Activated CD4-positive, alpha-beta memory T cell treated with anti-CD3 and anti-CD28 coated beads for 36 hours (primary cell): ENCODE measurements at regions of chr11 and their contacts with region 1.

Region 1: GRCh38 chr11:66438504-66439466 is at the start of gene MRPL11:
- DNase-seq: peak; percentile 94
- H3K4me3 Mint-ChIP-seq: peak within 1 kb of the TSS; percentile 86
- H3K27ac Mint-ChIP-seq: peak within 1 kb of the TSS; percentile 99
- H3K4me1 Mint-ChIP-seq: peaks cover 13% of the 10 kb centered on the region
- H3K27me3 Mint-ChIP-seq: peaks cover 3% of the 10 kb centered on the region
- total RNA-seq, gene MRPL11: 104 to 106 TPM

Region 2: GRCh38 chr11:66386171-66387069 is 52.4 kb before region 1 on chr11:
- CTCF ChIA-PET with region 1: interaction called, 19 read pairs
- POLR2A ChIA-PET with region 1: no interaction called
- intact Hi-C with region 1: no loop called
- DNase-seq: peak; percentile 88
- H3K4me3 Mint-ChIP-seq: peak overlapping the region; percentile 1
- H3K27ac Mint-ChIP-seq: no peak overlapping the region
- H3K4me1 Mint-ChIP-seq: peaks cover 8% of the 10 kb centered on the region
- H3K27me3 Mint-ChIP-seq: peaks cover 1% of the 10 kb centered on the region

Region 3: DNA sequence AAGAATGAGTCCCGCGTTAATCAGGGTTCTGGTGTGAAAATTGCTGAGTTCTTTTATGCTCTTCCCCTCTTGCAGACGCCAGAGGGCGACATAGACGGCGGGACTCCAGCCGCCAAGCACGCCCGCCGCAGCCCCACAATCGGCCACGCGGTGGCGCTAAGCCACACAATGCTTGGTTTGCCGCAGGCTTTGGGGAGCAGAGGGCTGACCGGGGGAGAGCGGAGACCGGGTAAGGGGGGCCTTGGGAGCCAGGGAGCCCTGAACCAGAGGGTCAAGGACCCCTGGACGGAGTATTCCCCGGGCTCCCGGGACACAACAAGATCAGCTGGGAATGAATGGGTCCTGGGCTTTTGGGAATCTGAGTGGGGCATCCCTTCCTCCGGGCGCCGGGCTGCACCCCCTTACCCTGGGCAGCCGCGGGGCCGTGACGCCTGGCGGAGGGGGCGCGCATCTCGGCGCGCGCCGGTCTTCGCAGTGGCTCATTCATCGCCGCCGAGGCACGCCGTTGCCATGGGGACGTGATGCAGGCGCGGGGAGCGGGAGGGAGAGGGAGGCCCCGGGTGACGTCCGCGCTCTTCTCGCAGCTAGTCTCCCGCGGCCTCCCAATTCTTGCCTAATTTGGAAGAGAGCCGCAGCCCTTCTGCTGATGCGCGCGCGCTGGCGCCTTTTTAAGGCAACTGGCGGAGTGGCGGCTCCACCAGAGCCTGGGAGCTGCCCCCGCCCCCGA is 30.1 kb before region 1 on chr11:
- CTCF ChIA-PET with region 1: interaction called, 104 read pairs
- POLR2A ChIA-PET with region 1: no interaction called
- intact Hi-C with region 1: loop called (anchors 2 kb)
- DNase-seq: peak; percentile 93
- H3K4me3 Mint-ChIP-seq: peak overlapping the region; percentile 67
- H3K27ac Mint-ChIP-seq: no peak overlapping the region
- H3K4me1 Mint-ChIP-seq: peaks cover 4% of the 10 kb centered on the region
- H3K27me3 Mint-ChIP-seq: peaks cover 17% of the 10 kb centered on the region

Region 4: DNA sequence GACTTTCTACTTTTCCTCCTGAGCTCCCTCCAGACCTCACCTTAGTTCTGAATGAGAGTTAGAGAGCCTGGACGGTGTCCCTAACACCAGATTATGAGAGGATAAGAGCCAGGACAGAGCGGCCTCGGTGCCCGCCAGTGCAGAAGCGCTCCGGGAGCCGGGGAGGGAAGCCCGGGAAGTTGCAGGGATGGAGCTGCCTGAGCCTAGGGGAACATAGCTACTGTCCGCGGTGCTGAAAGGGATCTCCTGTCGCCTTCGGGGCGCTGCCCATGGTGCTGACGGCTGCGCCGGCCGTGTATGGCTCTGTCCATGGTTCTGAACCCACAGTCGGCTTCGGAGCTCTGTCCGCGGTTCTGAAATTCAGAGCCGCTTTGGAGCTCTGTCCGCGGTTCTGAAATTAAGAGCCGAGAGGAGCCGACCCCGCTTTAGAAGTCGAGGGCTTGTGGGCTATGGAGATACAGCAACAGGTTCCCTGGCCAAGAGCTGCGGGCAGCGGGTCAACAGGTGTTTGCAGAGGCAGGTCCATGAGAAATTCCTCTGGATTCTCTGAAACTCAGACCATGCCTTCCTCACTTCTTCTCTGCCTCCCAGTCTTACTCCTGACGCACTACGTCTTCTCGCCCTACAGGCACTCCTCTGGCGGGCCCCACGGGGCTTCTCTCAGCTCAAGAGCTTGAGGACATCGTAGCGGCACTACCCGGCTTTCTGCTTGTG is 17.1 kb before region 1 on chr11:
- CTCF ChIA-PET with region 1: interaction called, 22 read pairs
- POLR2A ChIA-PET with region 1: interaction called, 7 read pairs
- intact Hi-C with region 1: no loop called
- DNase-seq: peak; percentile 92
- H3K4me3 Mint-ChIP-seq: no peak overlapping the region
- H3K27ac Mint-ChIP-seq: no peak overlapping the region
- H3K4me1 Mint-ChIP-seq: peaks cover 27% of the 10 kb centered on the region
- H3K27me3 Mint-ChIP-seq: peaks cover 26% of the 10 kb centered on the region

Region 5: GRCh38 chr11:66466225-66467027 is 27.6 kb after region 1 on chr11 and contains the start of gene PELI3:
- CTCF ChIA-PET with region 1: interaction called, 8 read pairs
- POLR2A ChIA-PET with region 1: interaction called, 3 read pairs
- intact Hi-C with region 1: loop called (anchors 1 kb)
- DNase-seq: peak; percentile 96
- H3K4me3 Mint-ChIP-seq: peak within 1 kb of the TSS; percentile 79
- H3K27ac Mint-ChIP-seq: peak within 1 kb of the TSS; percentile 64
- H3K4me1 Mint-ChIP-seq: peaks cover 31% of the 10 kb centered on the region
- H3K27me3 Mint-ChIP-seq: no peaks in the 10 kb centered on the region
- total RNA-seq, gene PELI3: 7.0 to 8.5 TPM

Region 6: DNA sequence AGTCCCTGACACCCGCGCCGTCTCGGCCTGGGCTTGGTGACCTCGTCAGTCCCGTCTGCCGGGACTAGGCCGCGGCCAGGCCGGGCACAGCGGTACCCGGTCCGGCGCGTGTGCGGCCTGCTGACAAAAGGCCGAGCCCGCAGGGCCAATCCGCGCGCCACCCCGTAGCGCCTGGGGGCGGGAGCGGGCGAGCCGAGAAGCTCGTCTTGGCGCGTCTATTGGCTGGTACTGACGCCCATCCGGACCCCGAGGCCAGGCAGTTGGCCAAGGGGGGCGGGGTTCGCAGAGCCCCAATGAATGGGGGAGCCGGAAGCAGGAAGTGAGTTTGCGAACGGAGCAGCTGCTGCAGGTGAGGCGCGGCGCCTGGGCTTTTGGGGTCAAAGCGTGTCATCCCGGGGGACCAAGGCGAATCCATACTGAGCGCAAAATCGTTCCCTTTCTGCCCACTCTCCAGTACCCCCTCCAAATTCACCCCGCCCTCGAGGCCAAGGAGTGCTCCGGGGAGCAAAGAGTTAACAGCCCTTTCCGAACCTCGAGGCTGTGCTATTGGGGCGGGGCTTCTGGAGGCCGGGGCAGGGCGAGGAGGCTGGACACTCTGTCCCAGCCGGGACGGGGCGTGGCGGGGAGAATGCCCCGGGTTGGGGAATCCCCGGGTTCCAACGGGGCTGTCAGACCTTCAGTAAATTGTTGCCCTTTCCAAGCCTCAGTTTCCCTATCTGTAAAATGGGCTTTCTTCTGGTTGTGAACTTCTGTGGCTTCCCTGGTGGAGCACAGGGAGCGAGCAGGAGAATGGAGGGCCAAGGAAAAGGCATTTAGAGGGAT is 41.5 kb after region 1 on chr11 and contains the start of gene DPP3:
- CTCF ChIA-PET with region 1: interaction called, 13 read pairs
- POLR2A ChIA-PET with region 1: interaction called, 7 read pairs
- intact Hi-C with region 1: loop called (anchors 1 kb)
- DNase-seq: peak; percentile 98
- H3K4me3 Mint-ChIP-seq: peak within 1 kb of the TSS; percentile 88
- H3K27ac Mint-ChIP-seq: peak within 1 kb of the TSS; percentile 87
- H3K4me1 Mint-ChIP-seq: peaks cover 25% of the 10 kb centered on the region
- H3K27me3 Mint-ChIP-seq: no peaks in the 10 kb centered on the region
- total RNA-seq, gene DPP3: 76.1 to 89.7 TPM